ENCODE measurements at regions of chr7 and their contacts with region 1.

Region 1: GRCh38 chr7:11831736-11832495 is at the start of gene THSD7A:
- DNase-seq: no peak
- H3K4me3 ChIP-seq: peak within 1 kb of the TSS; percentile 37 to 41
- H3K27ac ChIP-seq: peak within 1 kb of the TSS; percentile 60 to 62
- H3K4me1 ChIP-seq: no peaks in the 10 kb centered on the region
- H3K27me3 ChIP-seq: no peaks in the 10 kb centered on the region
- CTCF ChIP-seq: peak in 1 of 4 experiments; percentile 17
- POLR2A ChIP-seq: no peak
- total RNA-seq, gene THSD7A: 3.1 to 9.9 TPM

Region 2: DNA sequence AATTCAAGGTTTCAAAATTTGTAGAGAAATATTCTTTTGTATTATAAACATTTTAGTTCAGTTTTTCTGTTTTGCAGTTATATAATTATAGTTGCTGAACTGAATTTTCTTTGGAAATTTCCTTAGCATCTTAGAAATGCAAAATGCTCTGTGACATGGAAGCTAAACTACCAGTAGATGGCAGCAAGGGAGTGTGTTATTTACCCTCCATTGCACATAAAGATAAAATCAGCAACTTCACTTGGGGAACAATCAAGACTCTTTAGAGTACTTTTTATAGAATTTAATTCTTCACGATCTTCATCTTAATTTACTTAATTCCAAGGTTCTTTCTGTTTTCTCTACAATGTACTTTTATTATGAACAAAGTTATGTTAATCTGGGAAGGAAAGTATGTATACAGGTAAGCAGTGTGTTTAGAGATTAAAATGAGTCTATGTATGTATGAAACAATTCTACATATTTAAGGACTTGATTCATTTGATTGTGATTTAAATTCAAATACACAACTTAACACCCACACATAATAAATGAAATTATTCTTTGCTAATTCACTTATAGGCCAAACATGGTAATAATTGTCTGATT is 404.1 kb before region 1 on chr7:
- intact Hi-C with region 1: loop called (anchors 5 kb)
- DNase-seq: peak; percentile 24
- H3K4me3 ChIP-seq: no peak overlapping the region
- H3K27ac ChIP-seq: no peak overlapping the region
- H3K4me1 ChIP-seq: no peaks in the 10 kb centered on the region
- H3K27me3 ChIP-seq: no peaks in the 10 kb centered on the region
- CTCF ChIP-seq: peak in 3 of 4 experiments; percentile 59 to 82 (median 77)
- POLR2A ChIP-seq: no peak

Region 3: GRCh38 chr7:11726794-11727155 is 105.1 kb before region 1 on chr7:
- intact Hi-C with region 1: loop called (anchors 10 kb)
- DNase-seq: peak; percentile 5
- H3K4me3 ChIP-seq: no peak overlapping the region
- H3K27ac ChIP-seq: no peak overlapping the region
- H3K4me1 ChIP-seq: no peaks in the 10 kb centered on the region
- H3K27me3 ChIP-seq: no peaks in the 10 kb centered on the region
- CTCF ChIP-seq: no peak
- POLR2A ChIP-seq: no peak

Region 4: DNA sequence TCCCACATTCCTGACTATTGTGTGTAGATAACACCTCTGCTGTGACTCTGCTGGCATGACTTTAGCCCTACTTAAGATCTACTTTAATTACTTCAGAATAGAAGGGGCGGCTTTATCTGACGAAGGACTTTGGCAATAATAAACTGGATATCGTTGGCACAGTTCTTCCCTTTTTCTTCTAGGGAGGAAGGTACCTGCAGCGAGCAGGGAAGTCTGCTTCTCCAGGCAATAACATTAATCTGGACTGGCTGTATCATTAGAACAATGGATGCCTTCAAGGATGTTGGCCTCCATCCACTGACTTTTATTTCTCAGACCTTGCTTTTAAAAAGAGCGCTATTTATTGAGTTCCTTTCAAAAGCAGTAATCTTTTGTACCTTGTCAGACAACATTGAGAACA is 172.7 kb after region 1 on chr7:
- intact Hi-C with region 1: no loop called
- DNase-seq: no peak
- H3K4me3 ChIP-seq: no peak overlapping the region
- H3K27ac ChIP-seq: no peak overlapping the region
- H3K4me1 ChIP-seq: no peaks in the 10 kb centered on the region
- H3K27me3 ChIP-seq: no peaks in the 10 kb centered on the region
- CTCF ChIP-seq: no peak
- POLR2A ChIP-seq: no peak

Region 5: DNA sequence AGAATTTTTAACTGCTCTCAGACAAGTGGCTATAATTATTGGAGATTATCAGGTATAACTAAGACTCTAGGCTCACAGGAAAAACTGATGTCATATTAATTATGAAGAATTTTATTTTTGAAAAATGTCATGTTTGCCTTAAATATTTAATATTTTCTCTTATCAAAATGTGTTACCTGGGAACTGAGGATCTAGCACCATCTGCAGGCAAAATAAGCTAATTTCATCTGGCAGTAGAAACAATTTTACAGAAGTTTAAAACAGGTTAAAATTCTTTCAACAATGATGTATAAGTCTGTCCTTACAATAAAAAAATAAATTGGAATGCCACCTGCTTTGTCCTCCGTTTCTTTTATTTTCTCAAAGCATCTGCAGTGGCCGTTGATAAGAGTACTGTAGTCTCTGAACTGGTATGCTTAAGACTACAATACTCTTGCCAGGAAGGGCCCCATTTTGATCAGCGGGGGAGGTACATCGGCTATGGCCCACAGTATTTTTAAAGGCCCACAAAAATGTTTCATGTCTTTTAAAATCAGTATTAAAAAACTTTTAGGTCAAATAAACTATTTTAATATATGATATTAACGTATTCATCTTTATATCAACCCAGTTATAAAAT is 490.5 kb after region 1 on chr7:
- intact Hi-C with region 1: loop called (anchors 5 kb)
- DNase-seq: no peak
- H3K4me3 ChIP-seq: no peak overlapping the region
- H3K27ac ChIP-seq: no peak overlapping the region
- H3K4me1 ChIP-seq: no peaks in the 10 kb centered on the region
- H3K27me3 ChIP-seq: no peaks in the 10 kb centered on the region
- CTCF ChIP-seq: peak in 3 of 4 experiments; percentile 61 to 75 (median 72)
- POLR2A ChIP-seq: no peak

Measured in prostate gland (tissue), 2 donors.